ENCODE measurements at regions of chr4 and their contacts with region 1.

Region 1: DNA sequence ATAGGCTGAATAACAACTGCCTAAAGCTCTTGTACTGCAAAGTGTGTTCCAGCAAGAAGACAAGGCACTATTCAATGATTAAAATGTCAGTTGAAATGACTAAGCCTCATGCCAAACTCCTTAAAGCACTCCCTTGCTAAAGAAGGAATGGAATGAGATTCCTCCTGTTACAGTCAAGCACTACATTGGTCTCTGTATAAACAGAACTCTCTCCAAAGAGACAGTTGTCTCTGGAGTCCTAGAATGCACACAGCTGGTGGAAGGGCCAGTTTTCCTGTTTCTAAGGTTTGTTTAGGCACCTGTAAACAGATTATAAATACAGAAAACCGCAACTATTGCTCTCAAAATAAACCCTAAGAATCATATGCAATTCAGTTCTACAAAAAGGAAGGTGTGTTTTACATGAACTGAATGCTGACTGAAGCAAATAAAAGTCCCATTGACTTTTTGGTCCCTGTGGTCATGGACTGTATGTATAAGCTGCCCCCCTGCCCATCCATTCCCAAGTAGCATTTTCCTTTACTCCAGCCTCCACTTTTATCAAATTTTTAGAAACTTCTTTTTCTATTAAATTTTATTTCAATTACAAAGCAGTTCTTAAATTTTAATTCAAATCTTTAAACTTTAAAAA is 47.0 kb downstream of the FAT1 start:
- DNase-seq: no peak
- H3K4me3 ChIP-seq: no peak overlapping the region
- H3K27ac ChIP-seq: peak overlapping the region in 1 of 2 donors; percentile 33
- H3K4me1 ChIP-seq: no peaks in the 10 kb centered on the region
- H3K27me3 ChIP-seq: no peaks in the 10 kb centered on the region
- CTCF ChIP-seq: no peak
- POLR2A ChIP-seq: no peak

Region 2: DNA sequence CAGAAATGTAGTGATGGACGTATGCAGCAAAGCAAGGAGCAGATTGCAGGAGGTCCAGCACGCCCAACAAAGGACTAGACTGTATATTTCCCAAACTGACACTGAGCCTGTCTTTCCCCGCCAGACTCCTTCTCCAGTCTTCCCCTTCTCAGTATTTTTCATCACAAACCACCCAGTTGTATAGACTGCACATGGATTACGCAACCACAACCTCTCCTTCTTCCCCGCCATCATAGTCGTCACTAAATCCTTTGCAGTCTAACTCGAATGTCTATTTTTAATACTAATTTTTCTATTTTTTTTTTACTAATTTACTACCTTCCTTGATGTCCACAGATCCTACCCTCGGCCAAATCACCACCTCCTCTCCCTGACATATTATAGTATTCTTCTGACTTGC is 226.7 kb before region 1 on chr4:
- intact Hi-C with region 1: no loop called
- DNase-seq: no peak
- H3K4me3 ChIP-seq: no peak overlapping the region
- H3K27ac ChIP-seq: no peak overlapping the region
- H3K4me1 ChIP-seq: no peaks in the 10 kb centered on the region
- H3K27me3 ChIP-seq: no peaks in the 10 kb centered on the region
- CTCF ChIP-seq: no peak
- POLR2A ChIP-seq: no peak

Region 3: GRCh38 chr4:186725469-186726425 is 49.1 kb after region 1 on chr4:
- intact Hi-C with region 1: loop called (anchors 2 kb)
- DNase-seq: peak; percentile 87
- H3K4me3 ChIP-seq: peak overlapping the region; percentile 74 to 80
- H3K27ac ChIP-seq: peak overlapping the region; percentile 89 to 92
- H3K4me1 ChIP-seq: no peaks in the 10 kb centered on the region
- H3K27me3 ChIP-seq: no peaks in the 10 kb centered on the region
- CTCF ChIP-seq: peak; percentile 29 to 81 (median 74)
- POLR2A ChIP-seq: no peak

Region 4: GRCh38 chr4:186746581-186746980 is 69.9 kb after region 1 on chr4:
- intact Hi-C with region 1: no loop called
- DNase-seq: no peak
- H3K4me3 ChIP-seq: no peak overlapping the region
- H3K27ac ChIP-seq: no peak overlapping the region
- H3K4me1 ChIP-seq: no peaks in the 10 kb centered on the region
- H3K27me3 ChIP-seq: no peaks in the 10 kb centered on the region
- CTCF ChIP-seq: no peak
- POLR2A ChIP-seq: no peak

Region 5: DNA sequence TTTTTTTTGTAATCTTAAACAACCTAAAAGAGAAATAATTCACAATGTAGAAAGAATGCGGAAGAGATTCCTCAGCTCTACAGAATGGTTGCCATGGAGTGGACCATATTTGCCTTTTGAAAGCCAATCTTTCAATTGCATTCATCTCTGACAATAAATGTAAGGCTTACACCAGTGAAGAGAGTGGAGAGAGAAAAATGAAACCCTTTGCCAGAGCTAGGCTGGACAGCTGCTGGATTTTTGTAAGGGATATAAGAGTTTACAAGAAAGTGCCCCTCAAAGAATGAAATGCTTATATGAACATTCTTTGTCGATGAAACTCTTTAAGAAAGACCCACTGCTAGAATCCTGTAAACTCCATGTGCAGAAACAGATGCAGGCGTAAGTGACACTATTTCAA is 113.0 kb after region 1 on chr4:
- intact Hi-C with region 1: no loop called
- DNase-seq: no peak
- H3K4me3 ChIP-seq: no peak overlapping the region
- H3K27ac ChIP-seq: no peak overlapping the region
- H3K4me1 ChIP-seq: no peaks in the 10 kb centered on the region
- H3K27me3 ChIP-seq: no peaks in the 10 kb centered on the region
- CTCF ChIP-seq: no peak
- POLR2A ChIP-seq: no peak

Measured in prostate gland (tissue), 2 donors.